ENCODE measurements at regions of chr21 and their contacts with region 1.

Region 1: GRCh38 chr21:33572350-33572749 is 16.1 kb downstream of the DONSON start:
- DNase-seq: no peak
- H3K4me3 ChIP-seq: no peak overlapping the region
- H3K27ac ChIP-seq: no peak overlapping the region
- H3K4me1 ChIP-seq: no peaks in the 10 kb centered on the region
- H3K27me3 ChIP-seq: no peaks in the 10 kb centered on the region
- CTCF ChIP-seq: no peak

Region 2: DNA sequence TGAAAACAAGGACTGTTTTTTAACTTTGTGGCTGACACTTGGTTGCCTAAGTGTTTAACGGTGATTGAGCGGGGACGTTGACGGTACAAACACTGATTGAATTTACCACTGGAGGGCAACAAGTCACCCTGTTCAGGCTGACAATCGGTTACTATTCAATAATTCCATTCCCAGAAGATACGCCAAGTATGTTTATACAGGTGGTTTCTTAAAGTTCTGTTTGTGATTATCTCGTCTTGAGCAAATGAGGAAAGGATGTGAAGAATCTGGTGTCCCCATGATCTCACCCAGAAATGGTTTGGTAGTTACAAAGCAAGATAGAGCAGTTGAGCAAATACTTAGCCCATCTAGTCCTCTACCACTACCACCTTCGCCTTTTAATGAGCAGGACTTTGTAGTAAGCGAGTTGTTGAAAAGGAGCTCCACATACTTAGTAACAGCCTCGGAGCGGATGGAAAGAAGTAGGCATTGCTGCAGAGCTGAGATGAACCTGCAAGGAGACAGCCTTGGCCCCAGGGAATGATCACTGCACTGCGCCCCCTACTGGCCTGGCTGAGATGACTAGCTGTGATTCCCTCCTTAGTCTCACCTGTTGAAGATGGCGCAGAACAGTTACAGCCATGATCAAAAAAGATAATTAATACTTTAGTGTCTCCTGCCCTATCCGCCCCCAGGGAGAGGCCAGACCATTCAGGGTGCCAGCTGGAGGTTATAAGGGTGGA is 211.3 kb before region 1 on chr21:
- CTCF ChIA-PET with region 1: no interaction called
- dilution Hi-C with region 1: no loop called
- in situ Hi-C with region 1: no loop called
- intact Hi-C with region 1: no loop called
- DNase-seq: peak; percentile 65
- H3K4me3 ChIP-seq: peak overlapping the region in 2 of 3 experiments; percentile 1 to 8
- H3K27ac ChIP-seq: no peak overlapping the region
- H3K4me1 ChIP-seq: peaks cover 17% of the 10 kb centered on the region
- H3K27me3 ChIP-seq: no peaks in the 10 kb centered on the region
- CTCF ChIP-seq: peak; percentile 89 to 98

Region 3: DNA sequence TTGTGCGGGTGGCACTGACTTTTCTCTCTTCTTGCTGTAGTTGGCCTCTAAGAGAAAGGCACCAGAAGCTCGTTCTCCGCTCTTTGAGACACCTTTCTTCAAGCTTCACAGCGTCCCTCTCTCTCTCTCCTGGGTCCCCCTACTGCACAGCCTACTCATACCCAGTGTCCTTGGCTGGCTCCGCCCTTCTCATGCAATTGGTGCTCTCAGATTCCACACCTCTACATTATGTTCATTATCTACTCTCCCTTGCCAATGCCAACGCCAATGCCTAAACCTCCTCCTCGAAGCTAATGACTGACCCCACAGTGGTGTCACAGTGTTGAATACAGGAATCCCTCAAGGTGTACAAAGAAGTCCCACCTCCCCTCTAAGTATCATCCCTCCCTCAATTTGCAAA is 76.0 kb before region 1 on chr21:
- CTCF ChIA-PET with region 1: no interaction called
- dilution Hi-C with region 1: loop called (anchors 5 kb)
- in situ Hi-C with region 1: no loop called
- intact Hi-C with region 1: no loop called
- DNase-seq: no peak
- H3K4me3 ChIP-seq: no peak overlapping the region
- H3K27ac ChIP-seq: no peak overlapping the region
- H3K4me1 ChIP-seq: no peaks in the 10 kb centered on the region
- H3K27me3 ChIP-seq: no peaks in the 10 kb centered on the region
- CTCF ChIP-seq: no peak

Region 4: DNA sequence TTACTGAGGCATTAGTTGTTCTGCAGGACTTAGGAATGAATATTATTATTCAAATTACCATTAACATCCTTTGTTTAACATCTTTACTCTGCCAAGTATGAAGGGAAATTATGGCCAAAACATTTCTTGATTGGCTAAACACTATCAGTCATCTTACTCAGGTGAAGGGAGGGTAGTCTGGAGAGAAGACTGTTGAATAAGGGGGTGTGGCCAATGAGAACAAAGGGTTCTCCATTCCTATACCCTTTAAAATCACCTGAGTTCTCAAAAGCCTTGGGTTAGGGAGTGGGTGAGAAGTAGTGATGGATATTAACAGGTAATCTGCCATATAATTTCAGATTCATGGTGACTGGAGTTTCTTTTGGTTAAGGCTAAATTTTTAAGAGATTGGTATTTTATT is 49.9 kb after region 1 on chr21:
- CTCF ChIA-PET with region 1: no interaction called
- dilution Hi-C with region 1: loop called (anchors 5 kb)
- in situ Hi-C with region 1: no loop called
- intact Hi-C with region 1: no loop called
- DNase-seq: no peak
- H3K4me3 ChIP-seq: no peak overlapping the region
- H3K27ac ChIP-seq: no peak overlapping the region
- H3K4me1 ChIP-seq: no peaks in the 10 kb centered on the region
- H3K27me3 ChIP-seq: no peaks in the 10 kb centered on the region
- CTCF ChIP-seq: no peak

Measured in mammary epithelial cell (primary cell).